Right ventricle myocardium inferior (tissue), 1 donor: ENCODE measurements at regions of chr12 and their contacts with region 1.

Region 1: DNA sequence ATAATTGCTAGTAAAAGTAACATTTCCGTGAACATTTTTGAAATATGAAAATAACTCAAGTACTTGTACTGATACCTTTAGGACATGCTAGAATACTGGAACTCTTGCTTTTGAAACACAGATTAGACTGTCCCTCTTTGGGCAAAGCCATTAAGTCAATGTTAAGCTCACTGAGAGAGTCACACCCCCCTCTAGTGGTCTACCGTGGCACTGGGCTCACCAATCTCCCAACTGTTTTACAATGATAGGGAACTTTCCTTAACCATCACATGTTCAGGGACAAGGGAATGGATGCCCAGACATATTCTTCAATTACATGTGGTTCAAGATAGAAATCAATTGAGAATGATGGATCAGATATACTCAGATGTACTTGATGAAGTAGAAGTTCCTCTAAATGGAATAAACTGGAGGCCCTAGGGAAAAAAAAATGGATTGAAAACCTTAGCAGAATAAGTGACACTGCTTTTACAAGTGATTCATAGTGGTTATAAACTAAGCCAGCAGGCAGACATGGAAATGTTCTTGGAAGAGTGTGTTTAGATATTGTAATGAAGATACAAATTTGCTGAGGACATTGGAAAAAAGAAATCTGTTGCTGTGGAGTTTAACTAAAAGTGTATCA is 17.8 kb downstream of the NANOG start:
- DNase-seq: peak; percentile 68
- ATAC-seq: no peak

Region 2: GRCh38 chr12:7661741-7662140 is 145.2 kb before region 1 on chr12:
- intact Hi-C with region 1: no loop called
- DNase-seq: no peak
- ATAC-seq: no peak

Region 3: GRCh38 chr12:7678738-7679137 is 128.2 kb before region 1 on chr12:
- intact Hi-C with region 1: loop called (anchors 5 kb)
- DNase-seq: no peak
- ATAC-seq: no peak

Region 4: GRCh38 chr12:8026291-8026900 is 219.4 kb after region 1 on chr12:
- intact Hi-C with region 1: no loop called
- DNase-seq: peak; percentile 96
- ATAC-seq: peak; percentile 99